GM10248 (cell line): ENCODE measurements at regions of chr22 and their contacts with region 1.

Region 1: DNA sequence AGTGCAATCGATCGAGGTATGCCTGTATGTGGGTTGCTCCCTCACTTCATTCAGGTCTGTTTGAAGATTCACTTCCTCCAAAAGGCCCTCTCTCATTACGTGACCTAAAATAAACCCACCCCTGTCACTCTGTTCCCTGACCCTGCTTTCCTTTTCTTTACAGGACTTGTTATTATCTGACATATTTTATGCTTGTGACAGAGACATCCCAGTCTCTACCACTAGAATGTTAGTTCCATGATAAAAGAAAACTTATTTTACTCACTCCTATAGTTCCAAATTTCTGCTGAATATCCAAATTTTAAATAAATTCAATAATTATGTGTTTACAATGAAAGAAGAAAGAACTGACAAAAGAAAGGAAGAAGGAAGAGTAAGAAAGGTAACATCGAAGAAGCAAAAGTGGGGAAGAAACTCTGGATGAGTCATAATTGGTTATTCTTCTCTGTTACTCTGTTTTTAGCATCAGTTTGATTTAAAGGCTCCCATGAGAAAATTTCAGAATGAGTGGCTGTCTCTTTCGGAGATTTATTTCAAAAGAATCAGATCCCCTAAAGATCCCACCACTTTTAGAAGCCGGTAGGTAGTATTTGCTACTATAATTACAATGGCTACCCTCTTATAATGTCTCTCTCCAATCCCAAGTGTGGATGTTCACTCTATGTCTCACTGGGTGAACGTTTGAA is 33.5 kb downstream of the ENTHD1 start:
- DNase-seq: peak; percentile 58
- CTCF ChIP-seq: no peak

Region 2: GRCh38 chr22:39266398-39267030 is 593.5 kb before region 1 on chr22:
- CTCF ChIA-PET with region 1: no interaction called
- POLR2A ChIA-PET with region 1: interaction called, 12 read pairs
- DNase-seq: peak; percentile 85
- CTCF ChIP-seq: no peak